ENCODE measurements at regions of chr11 and their contacts with region 1.

Region 1: DNA sequence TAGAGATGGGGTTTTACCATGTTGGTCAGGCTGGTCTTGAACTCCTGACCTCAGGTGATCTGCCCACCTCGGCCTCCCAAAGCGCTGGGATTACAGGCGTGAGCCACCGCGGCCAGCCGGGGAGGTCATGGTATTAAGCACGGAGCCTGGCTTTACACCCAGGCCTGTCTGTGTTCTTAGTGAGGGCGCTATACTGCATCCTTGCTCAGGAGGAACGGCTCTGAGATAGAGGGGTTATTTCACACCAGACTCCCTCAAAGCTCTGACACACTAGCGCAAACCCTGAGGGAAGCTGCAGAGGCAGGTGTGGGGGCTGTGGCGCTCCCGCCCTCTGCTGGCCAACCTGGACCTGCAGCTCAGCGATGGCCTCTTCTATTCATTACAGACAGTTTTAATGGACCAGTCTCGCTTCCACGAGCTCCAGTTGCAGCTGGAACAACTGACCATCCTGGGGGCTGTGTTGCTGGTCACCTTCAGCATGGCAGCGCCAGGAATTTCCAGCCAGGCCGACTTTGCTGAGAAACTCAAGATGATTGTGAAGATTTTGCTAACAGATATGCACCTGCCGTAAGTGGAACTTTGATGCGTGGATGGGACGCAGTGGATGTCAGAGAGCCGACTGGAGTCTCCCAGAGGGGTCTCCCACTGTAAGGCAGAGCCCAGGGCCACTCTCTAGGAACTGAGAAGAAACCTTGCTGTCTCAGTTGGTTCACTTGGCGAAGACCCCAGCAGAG is 26.2 kb downstream of the TCP11L1 start:
- DNase-seq: peak; percentile 82
- H3K4me3 ChIP-seq: no peak overlapping the region
- H3K27ac ChIP-seq: peak overlapping the region in 1 of 4 donors; percentile 87
- H3K4me1 ChIP-seq: peaks cover 0 to 51% (median 47%) of the 10 kb centered on the region in 4 donors
- H3K27me3 ChIP-seq: no peaks in the 10 kb centered on the region
- CTCF ChIP-seq: peak; percentile 49 to 92 (median 84)
- EP300 ChIP-seq: no peak
- POLR2A ChIP-seq: no peak

Region 2: DNA sequence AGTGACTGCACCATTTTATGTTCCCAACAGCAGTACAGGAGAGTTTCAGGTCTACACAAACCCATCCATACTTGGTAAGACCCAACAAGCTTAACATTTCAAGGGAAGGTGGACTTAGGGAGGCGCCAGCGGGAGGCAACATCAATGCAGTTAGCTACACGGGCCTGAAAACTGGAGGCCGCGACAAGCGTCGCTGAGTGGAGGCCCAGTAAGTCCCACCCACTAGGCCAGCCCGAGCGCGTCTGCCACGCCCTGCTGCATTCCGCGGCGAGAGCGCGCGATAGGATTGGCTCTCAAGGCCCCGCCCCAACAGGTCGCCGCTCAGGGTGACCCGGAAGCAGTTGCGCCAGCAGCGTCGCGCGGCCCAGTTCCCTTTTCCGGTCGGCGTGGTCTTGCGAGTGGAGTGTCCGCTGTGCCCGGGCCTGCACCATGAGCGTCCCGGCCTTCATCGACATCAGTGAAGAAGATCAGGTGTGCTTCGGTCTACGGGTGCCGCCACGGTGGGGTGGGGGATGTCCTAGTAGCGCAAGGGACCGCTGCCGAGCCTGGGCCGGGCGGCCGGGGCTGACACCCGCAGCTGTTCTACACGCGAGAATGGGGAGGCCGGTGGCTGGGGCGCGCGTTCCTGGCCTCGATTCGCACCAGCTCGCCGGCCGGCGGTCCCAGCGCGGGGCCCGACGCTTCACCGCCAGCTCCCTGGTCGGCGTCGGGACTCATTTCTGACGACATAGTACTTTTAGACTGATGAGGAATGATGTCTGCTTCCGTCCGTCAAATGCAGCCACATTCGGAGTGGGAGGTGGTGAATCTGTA is 481.9 kb before region 1 on chr11 and contains the start of gene EIF3M:
- intact Hi-C with region 1: loop called (anchors 10 kb)
- DNase-seq: peak; percentile 98
- H3K4me3 ChIP-seq: peak within 1 kb of the TSS; percentile 66 to 82 (median 73)
- H3K27ac ChIP-seq: peak within 1 kb of the TSS; percentile 83 to 89 (median 85)
- H3K4me1 ChIP-seq: peaks cover 0 to 30% (median 23%) of the 10 kb centered on the region in 4 donors
- H3K27me3 ChIP-seq: no peaks in the 10 kb centered on the region
- CTCF ChIP-seq: no peak
- EP300 ChIP-seq: no peak
- POLR2A ChIP-seq: peak; percentile 56 to 65
- total RNA-seq, gene EIF3M: 337 to 585 (median 347) TPM

Region 3: GRCh38 chr11:32809313-32809712 is 256.3 kb before region 1 on chr11:
- intact Hi-C with region 1: loop called (anchors 5 kb)
- DNase-seq: peak; percentile 70
- H3K4me3 ChIP-seq: no peak overlapping the region
- H3K27ac ChIP-seq: no peak overlapping the region
- H3K4me1 ChIP-seq: no peaks in the 10 kb centered on the region
- H3K27me3 ChIP-seq: no peaks in the 10 kb centered on the region
- CTCF ChIP-seq: peak in 2 of 4 experiments; percentile 38 to 51
- EP300 ChIP-seq: no peak
- POLR2A ChIP-seq: no peak

Region 4: GRCh38 chr11:32893343-32894148 is 172.1 kb before region 1 on chr11:
- intact Hi-C with region 1: loop called (anchors 5 kb)
- DNase-seq: peak; percentile 68
- H3K4me3 ChIP-seq: peak overlapping the region; percentile 83 to 97 (median 92)
- H3K27ac ChIP-seq: peak overlapping the region; percentile 93 to 99 (median 96)
- H3K4me1 ChIP-seq: peaks cover 0 to 27% (median 18%) of the 10 kb centered on the region in 4 donors
- H3K27me3 ChIP-seq: no peaks in the 10 kb centered on the region
- CTCF ChIP-seq: peak in 3 of 4 experiments; percentile 6 to 49 (median 28)
- EP300 ChIP-seq: no peak
- POLR2A ChIP-seq: no peak

Region 5: DNA sequence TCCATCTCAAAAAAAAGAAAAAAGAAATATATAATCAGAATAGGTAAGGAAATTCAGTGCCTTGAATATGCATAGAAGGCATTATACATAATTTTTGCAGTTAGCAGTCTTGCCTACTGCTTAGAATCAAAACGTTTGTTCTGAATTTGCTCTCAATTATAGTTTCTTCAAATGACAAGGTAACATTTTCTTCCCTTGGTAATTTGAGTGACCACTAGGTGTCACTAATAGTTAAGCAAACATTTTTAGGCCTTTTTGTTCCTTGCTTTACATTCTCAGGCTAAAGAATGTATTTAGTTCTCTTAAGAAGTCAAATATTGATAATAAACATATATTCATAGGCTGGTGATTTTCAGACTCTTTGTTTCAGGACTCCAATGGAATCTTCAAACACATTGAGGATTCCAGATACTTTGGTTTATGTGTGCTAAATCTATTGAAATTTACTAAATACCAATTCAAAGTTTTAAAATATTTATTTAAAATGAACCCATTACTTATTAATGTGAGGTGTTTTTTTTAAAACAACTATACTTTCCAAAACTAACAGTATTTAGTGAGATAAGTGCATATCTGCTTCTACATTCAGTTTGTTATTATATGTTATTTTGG is 105.0 kb before region 1 on chr11:
- intact Hi-C with region 1: loop called (anchors 1 kb)
- DNase-seq: no peak
- H3K4me3 ChIP-seq: no peak overlapping the region
- H3K27ac ChIP-seq: no peak overlapping the region
- H3K4me1 ChIP-seq: no peaks in the 10 kb centered on the region
- H3K27me3 ChIP-seq: no peaks in the 10 kb centered on the region
- CTCF ChIP-seq: peak in 3 of 4 experiments; percentile 52 to 68 (median 52)
- EP300 ChIP-seq: no peak
- POLR2A ChIP-seq: no peak

Region 6: DNA sequence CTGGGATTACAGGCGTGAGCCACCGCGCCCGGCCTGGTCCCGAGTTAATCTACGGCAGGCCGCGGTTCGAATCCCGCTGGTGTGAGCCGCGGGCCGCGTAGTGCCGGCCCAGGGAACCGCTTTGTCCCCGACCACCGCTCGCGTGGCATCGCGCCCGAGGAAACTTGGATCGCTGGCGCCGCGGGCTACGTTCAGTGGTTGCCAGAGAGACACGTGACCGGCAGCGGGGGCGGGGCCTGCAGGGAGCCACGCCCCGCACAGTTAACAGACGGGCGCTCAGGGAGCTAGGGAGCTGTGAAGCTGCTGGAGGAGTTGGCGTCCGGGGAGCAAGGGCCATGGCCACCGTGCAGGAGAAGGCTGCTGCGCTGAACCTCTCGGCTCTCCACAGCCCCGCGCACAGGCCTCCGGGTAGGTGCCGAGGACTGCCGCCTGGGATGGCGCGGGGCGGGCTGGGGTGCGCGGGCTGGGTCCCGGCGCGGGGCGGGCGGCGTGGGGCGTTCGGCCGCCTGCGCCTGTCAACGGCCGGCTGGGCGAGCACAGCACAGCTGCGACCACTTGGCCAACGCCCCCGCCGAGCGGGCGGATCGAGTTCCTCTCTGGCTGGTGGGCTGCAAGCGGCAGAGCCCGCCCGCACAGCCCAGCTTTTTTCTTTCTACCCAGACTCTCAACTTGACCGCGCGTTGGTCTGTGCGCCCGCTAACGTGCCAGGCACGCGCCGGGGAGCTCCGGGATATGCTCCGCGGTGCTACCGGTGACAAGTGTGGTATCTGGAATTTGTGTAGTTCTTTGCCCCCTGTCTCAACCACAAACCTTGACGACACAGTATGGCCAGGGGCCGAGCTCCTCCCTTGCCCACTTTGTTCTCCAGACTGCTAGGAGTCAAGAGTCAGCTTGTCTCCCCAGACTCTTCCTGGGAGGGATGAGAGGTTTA is 49.7 kb before region 1 on chr11 and contains the start of gene DEPDC7:
- intact Hi-C with region 1: loop called (anchors 1 kb)
- DNase-seq: peak; percentile 94
- H3K4me3 ChIP-seq: peak within 1 kb of the TSS; percentile 40 to 77 (median 66)
- H3K27ac ChIP-seq: peak within 1 kb of the TSS; percentile 62 to 82 (median 74)
- H3K4me1 ChIP-seq: peaks cover 0 to 13% (median 10%) of the 10 kb centered on the region in 4 donors
- H3K27me3 ChIP-seq: no peaks in the 10 kb centered on the region
- CTCF ChIP-seq: no peak
- EP300 ChIP-seq: no peak
- POLR2A ChIP-seq: no peak
- total RNA-seq, gene DEPDC7: 2.0 to 7.5 (median 3.1) TPM

Region 7: DNA sequence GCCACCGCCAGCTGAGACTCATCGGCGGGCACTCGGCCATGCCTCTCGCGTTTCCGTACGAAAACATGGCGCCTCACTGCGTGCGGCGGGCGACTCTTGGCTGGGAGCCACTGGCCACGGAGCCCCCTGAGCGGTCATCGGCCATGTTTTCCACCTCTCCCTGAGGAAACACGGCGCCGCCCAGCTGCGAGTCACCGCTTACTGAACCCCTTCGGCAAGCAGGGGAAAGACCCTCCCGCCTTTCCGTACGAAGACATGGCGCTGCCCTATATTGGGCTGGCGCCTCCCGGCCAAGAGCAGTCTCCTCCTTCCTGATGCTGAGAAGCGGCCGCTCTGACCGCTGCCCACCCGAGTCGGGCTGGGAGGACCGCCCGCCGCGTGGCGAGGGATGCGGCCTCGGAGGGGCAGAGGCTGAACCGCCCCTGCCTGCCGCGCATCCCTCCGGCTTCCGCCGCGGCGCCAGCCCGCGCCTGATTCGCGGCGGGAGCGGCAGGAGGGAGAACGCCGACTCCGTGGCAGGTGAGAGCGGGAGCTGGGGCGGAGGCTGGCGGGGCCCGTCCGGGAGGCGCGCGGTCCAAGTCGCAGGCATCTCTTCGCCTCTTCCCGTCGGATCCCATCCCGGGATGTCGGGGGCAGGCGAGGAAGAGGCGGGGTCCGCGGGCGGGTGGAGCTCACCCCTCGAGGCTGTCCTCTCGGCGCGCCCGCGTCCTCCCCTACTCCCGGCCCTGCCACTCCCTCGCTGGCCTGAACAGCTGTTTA is 26.2 kb before region 1 on chr11 and contains the start of gene TCP11L1:
- intact Hi-C with region 1: loop called (anchors 2 kb)
- DNase-seq: peak; percentile 96
- H3K4me3 ChIP-seq: peak within 1 kb of the TSS; percentile 72 to 98 (median 79)
- H3K27ac ChIP-seq: peak within 1 kb of the TSS; percentile 97 to 100 (median 98)
- H3K4me1 ChIP-seq: peaks cover 0 to 24% (median 21%) of the 10 kb centered on the region in 4 donors
- H3K27me3 ChIP-seq: no peaks in the 10 kb centered on the region
- CTCF ChIP-seq: no peak
- EP300 ChIP-seq: no peak
- POLR2A ChIP-seq: peak; percentile 28 to 45
- total RNA-seq, gene TCP11L1: 38.7 to 70.3 (median 42.7) TPM

Region 8: DNA sequence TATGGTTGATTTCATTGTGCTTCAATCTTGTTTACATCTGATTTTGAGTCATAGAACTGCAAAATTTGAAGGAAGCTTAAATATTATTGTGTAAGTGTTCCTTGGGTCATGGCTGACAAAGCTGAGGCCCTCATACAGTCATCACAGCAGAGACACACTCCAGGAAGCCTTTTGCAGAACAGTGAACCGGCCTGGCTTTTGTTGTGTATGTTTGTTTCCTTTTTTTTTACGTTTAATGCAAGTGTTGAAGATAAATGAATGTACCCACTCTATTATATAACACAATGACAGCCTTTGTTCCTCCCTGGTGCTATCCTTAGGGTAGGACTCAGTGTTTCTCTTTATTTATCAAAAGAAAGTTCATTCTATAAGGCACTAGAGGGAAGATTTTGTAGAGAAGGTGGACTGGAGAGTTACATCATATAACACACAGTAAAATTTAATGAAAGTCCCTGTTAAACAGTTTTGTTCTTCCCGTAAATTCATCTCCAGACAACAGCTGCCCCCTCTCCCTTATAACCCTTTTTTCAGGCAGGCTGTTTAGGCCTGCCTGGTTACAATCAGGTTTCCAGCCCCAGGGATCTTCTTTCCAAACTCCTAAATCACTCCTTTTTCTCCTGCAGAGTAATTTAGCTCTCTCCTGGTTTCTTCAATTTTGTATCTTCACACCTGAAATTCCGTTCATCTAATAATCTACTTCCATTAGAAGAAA is 130.0 kb after region 1 on chr11:
- intact Hi-C with region 1: no loop called
- DNase-seq: no peak
- H3K4me3 ChIP-seq: no peak overlapping the region
- H3K27ac ChIP-seq: peak overlapping the region in 2 of 4 donors; percentile 27 to 36
- H3K4me1 ChIP-seq: no peaks in the 10 kb centered on the region
- H3K27me3 ChIP-seq: no peaks in the 10 kb centered on the region
- CTCF ChIP-seq: no peak
- EP300 ChIP-seq: no peak
- POLR2A ChIP-seq: no peak

Region 9: GRCh38 chr11:33291004-33291777 is 225.6 kb after region 1 on chr11:
- intact Hi-C with region 1: no loop called
- DNase-seq: no peak
- H3K4me3 ChIP-seq: peak overlapping the region in 1 of 4 donors; percentile 27
- H3K27ac ChIP-seq: peak overlapping the region; percentile 64 to 84 (median 82)
- H3K4me1 ChIP-seq: peaks cover 0 to 76% (median 54%) of the 10 kb centered on the region in 4 donors
- H3K27me3 ChIP-seq: no peaks in the 10 kb centered on the region
- CTCF ChIP-seq: no peak
- EP300 ChIP-seq: peak; percentile 90 to 98 (median 96)
- POLR2A ChIP-seq: no peak